Left ventricle myocardium inferior (tissue), 1 donor: ENCODE measurements at regions of chr1 and their contacts with region 1.

Region 1: DNA sequence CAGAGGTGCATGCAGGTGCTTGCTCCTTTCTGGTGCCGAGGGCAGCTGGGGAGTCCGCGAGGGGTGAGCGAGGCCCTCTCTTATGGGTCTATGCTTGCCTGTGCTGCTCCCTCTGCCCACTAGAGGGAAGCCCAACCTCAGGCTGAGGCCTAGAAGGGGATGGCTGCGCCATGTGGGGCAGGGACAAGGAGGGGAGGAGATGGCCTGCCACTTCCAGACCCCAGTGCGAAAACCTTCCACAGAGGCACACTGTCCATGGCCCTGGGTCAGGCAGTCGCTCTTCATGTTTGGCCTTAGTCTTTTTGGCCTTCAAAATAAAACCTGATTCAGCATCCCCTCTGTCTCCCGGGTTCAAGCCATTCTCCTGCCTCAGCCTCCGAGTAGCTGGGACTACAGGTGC is 14.0 kb downstream of the RHBG start:
- DNase-seq: peak; percentile 39
- H3K4me3 ChIP-seq: no peak overlapping the region
- H3K27ac ChIP-seq: no peak overlapping the region
- H3K4me1 ChIP-seq: peaks cover 2% of the 10 kb centered on the region
- H3K27me3 ChIP-seq: peaks cover 23% of the 10 kb centered on the region
- CTCF ChIP-seq: peak; percentile 83

Region 2: GRCh38 chr1:156429313-156430060 is 46.5 kb after region 1 on chr1:
- intact Hi-C with region 1: loop called (anchors 5 kb)
- DNase-seq: no peak
- H3K4me3 ChIP-seq: no peak overlapping the region
- H3K27ac ChIP-seq: no peak overlapping the region
- H3K4me1 ChIP-seq: no peaks in the 10 kb centered on the region
- H3K27me3 ChIP-seq: peaks cover 100% of the 10 kb centered on the region
- CTCF ChIP-seq: no peak

Region 3: GRCh38 chr1:156445789-156446263 is 62.8 kb after region 1 on chr1:
- intact Hi-C with region 1: loop called (anchors 5 kb)
- DNase-seq: peak; percentile 75
- H3K4me3 ChIP-seq: no peak overlapping the region
- H3K27ac ChIP-seq: no peak overlapping the region
- H3K4me1 ChIP-seq: peaks cover 2% of the 10 kb centered on the region
- H3K27me3 ChIP-seq: peaks cover 49% of the 10 kb centered on the region
- CTCF ChIP-seq: peak; percentile 98